Caco-2 (cell line): ENCODE measurements at regions of chr1 and their contacts with region 1.

Region 1: GRCh38 chr1:115807723-115808122 is 33.2 kb downstream of the NHLH2 start:
- DNase-seq: peak; percentile 61 to 70
- H3K4me3 ChIP-seq: no peak overlapping the region
- H3K4me3 Mint-ChIP-seq: no peak overlapping the region
- H3K27ac Mint-ChIP-seq: no peak overlapping the region
- H3K4me1 ChIP-seq: peaks cover 20% of the 10 kb centered on the region
- H3K4me1 Mint-ChIP-seq: no peaks in the 10 kb centered on the region
- H3K27me3 ChIP-seq: no peaks in the 10 kb centered on the region
- H3K27me3 Mint-ChIP-seq: peaks cover 2% of the 10 kb centered on the region
- CTCF ChIP-seq: peak; percentile 46 to 59

Region 2: DNA sequence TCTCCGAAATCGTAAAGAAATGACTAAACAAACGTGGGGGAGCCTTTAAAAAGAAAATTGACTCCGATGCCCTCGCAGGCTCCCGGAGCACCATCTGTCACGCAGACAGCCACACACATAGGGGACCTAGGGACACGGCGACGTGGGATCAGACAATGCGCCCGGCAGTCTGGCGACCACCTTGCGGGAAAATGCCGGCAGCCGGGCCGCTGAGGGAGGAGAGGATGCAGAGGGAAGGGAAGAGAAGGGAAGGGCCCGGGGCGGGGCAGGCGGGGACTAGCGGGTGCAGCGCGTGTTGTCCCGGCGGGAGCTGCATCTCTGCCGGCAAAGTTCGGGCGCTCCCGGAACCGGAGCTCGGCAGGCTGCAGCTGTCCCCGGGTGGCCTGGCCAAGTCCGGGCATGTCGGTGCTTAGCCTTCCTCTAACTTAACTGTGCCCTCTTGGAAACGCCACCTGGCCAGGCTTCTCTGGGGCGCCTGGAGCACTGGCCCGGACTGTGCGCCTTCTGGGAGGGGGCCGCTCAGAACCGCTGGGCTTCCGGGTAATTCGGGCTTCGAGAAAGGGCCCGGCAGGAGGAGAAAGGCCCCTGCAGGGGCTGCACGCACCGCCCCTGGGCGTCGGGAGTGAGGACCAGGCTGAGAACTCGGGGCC is 31.4 kb after region 1 on chr1:
- CTCF ChIA-PET with region 1: no interaction called
- POLR2A ChIA-PET with region 1: no interaction called
- intact Hi-C with region 1: no loop called
- DNase-seq: no peak
- H3K4me3 ChIP-seq: no peak overlapping the region
- H3K4me3 Mint-ChIP-seq: no peak overlapping the region
- H3K27ac Mint-ChIP-seq: no peak overlapping the region
- H3K4me1 ChIP-seq: no peaks in the 10 kb centered on the region
- H3K4me1 Mint-ChIP-seq: no peaks in the 10 kb centered on the region
- H3K27me3 ChIP-seq: no peaks in the 10 kb centered on the region
- H3K27me3 Mint-ChIP-seq: peaks cover 5% of the 10 kb centered on the region
- CTCF ChIP-seq: no peak

Region 3: GRCh38 chr1:115888976-115889375 is 81.3 kb after region 1 on chr1:
- CTCF ChIA-PET with region 1: no interaction called
- POLR2A ChIA-PET with region 1: no interaction called
- intact Hi-C with region 1: loop called (anchors 5 kb)
- DNase-seq: no peak
- H3K4me3 ChIP-seq: no peak overlapping the region
- H3K4me3 Mint-ChIP-seq: no peak overlapping the region
- H3K27ac Mint-ChIP-seq: no peak overlapping the region
- H3K4me1 ChIP-seq: no peaks in the 10 kb centered on the region
- H3K4me1 Mint-ChIP-seq: no peaks in the 10 kb centered on the region
- H3K27me3 ChIP-seq: no peaks in the 10 kb centered on the region
- H3K27me3 Mint-ChIP-seq: peaks cover 7% of the 10 kb centered on the region
- CTCF ChIP-seq: no peak

Region 4: GRCh38 chr1:115980998-115981993 is 173.6 kb after region 1 on chr1:
- CTCF ChIA-PET with region 1: interaction called, 9 read pairs
- POLR2A ChIA-PET with region 1: no interaction called
- intact Hi-C with region 1: loop called (anchors 1 kb)
- DNase-seq: peak; percentile 38 to 46
- H3K4me3 ChIP-seq: no peak overlapping the region
- H3K4me3 Mint-ChIP-seq: no peak overlapping the region
- H3K27ac Mint-ChIP-seq: no peak overlapping the region
- H3K4me1 ChIP-seq: no peaks in the 10 kb centered on the region
- H3K4me1 Mint-ChIP-seq: no peaks in the 10 kb centered on the region
- H3K27me3 ChIP-seq: no peaks in the 10 kb centered on the region
- H3K27me3 Mint-ChIP-seq: no peaks in the 10 kb centered on the region
- CTCF ChIP-seq: peak; percentile 40 to 45

Region 5: GRCh38 chr1:116020668-116021275 is 213.0 kb after region 1 on chr1:
- CTCF ChIA-PET with region 1: interaction called, 3 read pairs
- POLR2A ChIA-PET with region 1: no interaction called
- intact Hi-C with region 1: loop called (anchors 5 kb)
- DNase-seq: peak; percentile 42 to 67
- H3K4me3 ChIP-seq: no peak overlapping the region
- H3K4me3 Mint-ChIP-seq: no peak overlapping the region
- H3K27ac Mint-ChIP-seq: no peak overlapping the region
- H3K4me1 ChIP-seq: no peaks in the 10 kb centered on the region
- H3K4me1 Mint-ChIP-seq: no peaks in the 10 kb centered on the region
- H3K27me3 ChIP-seq: no peaks in the 10 kb centered on the region
- H3K27me3 Mint-ChIP-seq: peaks cover 4% of the 10 kb centered on the region
- CTCF ChIP-seq: peak; percentile 37 to 51